PC-9 (cell line): ENCODE measurements at regions of chr3 and their contacts with region 1.

Region 1: DNA sequence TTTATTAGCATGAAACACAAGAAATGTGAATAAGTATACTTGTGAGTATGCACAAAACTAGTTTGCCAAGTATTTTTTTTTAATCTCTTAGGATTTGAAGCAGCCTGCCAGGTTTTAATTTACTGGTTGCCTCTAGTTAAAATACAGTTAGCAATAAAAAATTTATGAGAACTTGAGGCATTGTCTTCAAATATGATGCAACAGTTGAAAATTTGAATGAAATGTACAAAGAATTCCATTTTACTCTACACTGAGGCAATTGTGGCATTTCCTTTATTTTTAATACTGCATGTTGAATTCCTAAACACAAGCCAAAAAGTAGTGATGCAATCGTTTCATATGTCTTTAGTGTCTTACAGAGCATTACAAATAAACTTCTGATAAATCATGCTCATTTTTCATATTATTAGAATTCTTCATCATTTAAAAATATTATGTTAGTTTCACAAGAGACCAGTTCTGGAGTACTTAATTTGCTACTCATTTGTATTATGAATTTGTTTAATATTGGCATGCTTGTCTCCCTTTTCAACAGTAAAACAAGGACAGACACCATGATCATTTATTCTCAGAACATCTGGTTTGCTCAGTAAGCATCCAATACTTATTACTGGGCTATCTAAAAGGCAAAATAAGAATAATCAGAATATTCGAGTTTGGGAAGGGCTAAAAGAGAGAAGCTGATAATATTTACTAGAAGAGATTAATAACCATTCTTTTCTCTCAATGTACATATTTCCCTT is 124.8 kb upstream of the PTX3 start:
- DNase-seq: peak in 1 of 2 experiments; percentile 43
- H3K4me3 ChIP-seq: no peak overlapping the region
- H3K27ac ChIP-seq: peak overlapping the region; percentile 31
- H3K4me1 ChIP-seq: peaks cover 10% of the 10 kb centered on the region
- H3K27me3 ChIP-seq: no peaks in the 10 kb centered on the region
- CTCF ChIP-seq: no peak

Region 2: DNA sequence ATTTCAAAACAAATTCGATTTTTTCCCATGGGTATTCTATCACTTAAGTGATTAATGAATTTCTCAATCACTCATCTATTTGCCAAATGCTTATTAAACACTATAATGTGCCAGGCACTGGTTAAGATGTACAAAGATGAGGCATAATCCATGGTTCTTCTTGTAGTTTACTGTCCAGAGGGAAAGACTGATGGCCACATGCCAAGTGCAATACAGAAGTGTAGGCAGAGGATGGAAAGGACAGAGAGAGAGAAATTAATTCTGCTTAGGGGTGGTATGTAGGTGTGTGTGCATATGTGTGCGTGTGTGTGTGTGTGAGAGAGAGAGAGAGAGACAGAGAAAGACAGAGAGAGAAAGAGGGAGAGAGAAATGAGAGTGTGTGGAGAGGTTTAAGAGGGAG is 31.0 kb before region 1 on chr3:
- CTCF ChIA-PET with region 1: no interaction called
- POLR2A ChIA-PET with region 1: interaction called, 3 read pairs
- intact Hi-C with region 1: loop called (anchors 2 kb)
- DNase-seq: no peak
- H3K4me3 ChIP-seq: no peak overlapping the region
- H3K27ac ChIP-seq: no peak overlapping the region
- H3K4me1 ChIP-seq: no peaks in the 10 kb centered on the region
- H3K27me3 ChIP-seq: no peaks in the 10 kb centered on the region
- CTCF ChIP-seq: no peak